Activated T-helper 2 cell treated with anti-CD3 and anti-CD28 coated beads, Interferon-gamma antibody, Interleukin-2, Interleukin-4, amounts not matched to agents 10 μg/mL and 5 μg/mL and 100 μg/mL, durations not matched to agents 14 hours and 24 hours and 36 hours (primary cell): ENCODE measurements at regions of chr16 and their contacts with region 1.

Region 1: DNA sequence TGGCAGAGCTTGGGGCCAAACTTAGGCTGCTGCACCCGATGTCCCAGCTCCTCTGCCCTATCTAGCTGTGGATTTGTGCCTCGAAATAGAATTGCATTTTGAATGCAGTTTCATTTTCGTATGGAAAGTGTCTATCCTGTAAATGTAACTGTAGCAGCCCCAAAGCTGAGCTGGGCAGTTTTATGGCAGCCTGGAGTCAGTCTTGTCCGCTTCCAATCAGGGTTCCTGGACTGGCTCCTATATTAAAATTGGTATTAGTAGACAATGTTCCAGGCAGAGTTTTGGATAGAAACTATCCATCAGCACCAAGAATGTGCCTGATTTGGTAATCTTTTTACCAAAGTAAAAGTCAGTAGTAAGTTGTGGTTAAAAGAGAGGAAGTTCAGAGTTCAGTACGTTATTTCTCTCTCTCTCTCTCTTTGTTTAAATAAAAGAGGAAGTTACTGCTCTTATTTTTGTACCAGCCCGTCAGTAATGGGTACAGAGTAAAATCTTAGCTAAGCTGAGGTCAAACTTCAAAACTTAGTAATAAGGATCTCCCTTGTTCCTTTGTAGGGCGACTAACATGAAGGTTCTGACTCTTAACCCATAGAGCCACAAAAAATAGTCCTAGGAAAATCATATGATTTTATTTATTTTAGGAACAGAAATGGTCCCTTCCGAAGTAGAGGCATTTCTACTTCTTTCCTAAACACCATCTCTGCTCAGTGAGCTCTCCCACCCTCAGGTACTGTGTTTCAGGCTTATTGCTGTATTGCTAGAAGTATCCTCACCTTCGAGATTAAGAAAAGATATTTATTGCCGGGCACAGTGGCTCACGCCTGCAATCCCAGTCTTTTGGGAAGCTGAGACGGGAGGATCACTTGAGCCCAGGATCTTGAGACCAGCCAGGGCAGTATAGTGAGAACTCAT is 28.0 kb downstream of the PRKCB start:
- DNase-seq: peak; percentile 30
- H3K4me3 Mint-ChIP-seq: peak overlapping the region; percentile 79
- H3K27ac Mint-ChIP-seq: peak overlapping the region; percentile 92
- H3K4me1 Mint-ChIP-seq: peaks cover 73% of the 10 kb centered on the region
- H3K27me3 Mint-ChIP-seq: no peaks in the 10 kb centered on the region

Region 2: DNA sequence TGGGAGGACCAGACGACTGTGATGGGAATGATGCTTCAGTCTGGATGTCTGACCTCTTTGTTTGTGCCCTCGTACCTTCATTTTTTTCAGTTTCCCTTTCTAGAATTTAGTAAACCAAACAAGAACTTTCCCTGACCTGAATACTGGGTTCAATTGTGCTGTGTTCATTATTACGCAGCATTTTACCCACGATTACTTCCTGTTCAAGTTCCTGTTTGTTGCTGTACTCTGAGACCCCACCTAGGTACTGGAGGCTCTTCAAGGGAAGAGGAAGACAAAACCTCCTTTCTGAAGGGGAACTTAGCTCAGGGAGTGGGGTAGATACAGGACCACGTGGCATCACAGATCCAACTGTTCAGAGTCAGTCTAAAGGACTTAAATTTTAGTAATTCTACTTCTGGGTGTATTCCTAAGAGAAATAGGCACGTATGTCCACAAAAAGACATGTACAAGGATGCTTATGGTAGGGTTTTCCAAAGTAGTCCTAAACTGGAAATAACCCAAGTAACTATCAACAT is 37.2 kb before region 1 on chr16:
- intact Hi-C with region 1: loop called (anchors 5 kb)
- DNase-seq: no peak
- H3K4me3 Mint-ChIP-seq: peak overlapping the region; percentile 10
- H3K27ac Mint-ChIP-seq: peak overlapping the region; percentile 13
- H3K4me1 Mint-ChIP-seq: peaks cover 40% of the 10 kb centered on the region
- H3K27me3 Mint-ChIP-seq: no peaks in the 10 kb centered on the region

Region 3: GRCh38 chr16:23847948-23848347 is 15.8 kb before region 1 on chr16:
- intact Hi-C with region 1: loop called (anchors 2 kb)
- DNase-seq: peak; percentile 34
- H3K4me3 Mint-ChIP-seq: no peak overlapping the region
- H3K27ac Mint-ChIP-seq: peak overlapping the region; percentile 79
- H3K4me1 Mint-ChIP-seq: peaks cover 79% of the 10 kb centered on the region
- H3K27me3 Mint-ChIP-seq: no peaks in the 10 kb centered on the region